H1 (cell line): ENCODE measurements at regions of chr11 and their contacts with region 1.

Region 1: DNA sequence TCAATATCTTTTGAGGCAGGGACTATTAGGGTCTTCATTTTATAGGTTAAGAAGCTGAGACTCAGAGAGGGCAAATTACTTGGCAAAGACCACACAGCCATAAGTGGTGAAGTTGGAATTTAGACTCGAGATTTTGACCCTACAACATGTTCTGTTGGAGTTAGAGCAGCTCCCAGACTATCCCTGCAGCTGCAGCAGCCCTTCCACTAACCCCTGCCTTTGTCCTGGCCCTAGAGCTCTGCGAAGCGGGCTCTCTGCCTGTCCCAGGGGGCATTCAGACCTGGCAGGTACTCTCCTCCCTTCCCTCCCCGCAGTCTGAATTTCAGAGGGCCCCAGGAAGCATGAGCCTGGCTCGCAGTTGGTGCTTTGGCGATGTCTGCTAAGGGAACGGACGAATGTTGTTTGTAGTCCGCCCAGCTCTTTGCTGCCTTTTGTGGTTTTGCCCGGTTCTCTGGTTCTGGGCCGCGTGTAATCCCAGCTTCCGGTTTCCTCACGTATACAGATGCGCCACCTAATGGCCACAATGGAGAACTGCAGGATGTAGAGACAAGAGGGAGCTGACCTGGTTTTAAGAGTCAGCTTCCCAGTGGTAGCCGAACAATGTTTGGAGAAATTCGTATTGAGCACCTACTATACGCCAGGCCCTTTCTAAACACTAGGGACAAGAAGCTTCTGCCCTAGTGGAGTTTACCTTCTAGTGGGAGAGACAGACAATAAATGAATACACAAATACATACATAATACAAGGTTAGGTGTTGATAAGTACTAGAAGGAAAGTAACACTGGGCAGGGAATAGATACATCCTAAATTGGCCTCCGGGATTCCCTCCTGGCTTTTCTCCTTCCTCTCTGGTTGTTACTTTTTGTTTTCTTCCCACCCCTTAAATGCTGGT is 125.2 kb downstream of the ST3GAL4 start:
- DNase-seq: peak; percentile 77 to 80
- H3K4me3 ChIP-seq: peak overlapping the region in 1 of 4 experiments; percentile 20; a peak in 1 of 8 replicates
- H3K27ac ChIP-seq: peak overlapping the region; percentile 72; the same call in 1 of the 2 replicates
- H3K4me1 ChIP-seq: peaks cover 0 to 6% (median 2%) of the 10 kb centered on the region in 4 experiments; a peak in 6 of 7 replicates
- H3K27me3 ChIP-seq: no peaks in the 10 kb centered on the region
- CTCF ChIP-seq: peak; percentile 59 to 94 (median 85)
- EP300 ChIP-seq: 0 out of 3 replicates have a peak, but pooled peaks of 1 of the 2 experiments have one; percentile 41
- POLR2A ChIP-seq: peak in 1 of 2 experiments; percentile 78; a peak in 2 of 3 replicates
- RAD21 ChIP-seq: peak; percentile 72 to 78

Region 2: DNA sequence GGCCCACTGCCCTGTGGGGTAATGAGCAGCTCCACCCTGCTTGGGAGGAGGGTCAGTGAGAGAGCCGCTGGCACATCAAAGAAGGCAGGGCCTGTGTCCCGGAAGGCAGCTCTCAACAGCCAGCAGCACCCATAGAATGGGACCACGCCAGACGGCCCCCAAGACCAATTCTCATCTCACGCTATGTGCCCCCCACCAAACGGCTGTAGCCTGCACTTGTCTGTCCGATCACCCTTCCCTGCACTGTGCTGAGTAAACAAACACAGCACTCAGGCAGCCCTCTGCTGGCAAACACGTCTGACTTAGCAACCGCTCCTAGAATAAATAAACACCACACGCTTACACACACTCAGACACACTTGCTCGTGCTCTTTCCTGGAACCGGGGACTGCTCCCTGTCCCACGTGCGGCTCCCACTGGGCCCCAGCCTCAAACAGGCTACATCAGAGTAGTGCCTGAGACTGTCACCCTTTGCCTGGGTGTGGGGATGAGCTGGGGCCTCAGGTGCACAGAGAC is 364.8 kb before region 1 on chr11:
- CTCF ChIA-PET with region 1: no interaction called
- POLR2A ChIA-PET with region 1: no interaction called
- DNase-seq: no peak
- H3K4me3 ChIP-seq: no peak overlapping the region
- H3K27ac ChIP-seq: no peak overlapping the region; the same call in 1 of the 2 replicates
- H3K4me1 ChIP-seq: peaks cover 0 to 7% (median 0%) of the 10 kb centered on the region in 4 experiments; a peak in 3 of 7 replicates
- H3K27me3 ChIP-seq: 0 out of 7 replicates have a peak, but pooled peaks cover 0 to 3% (median 0%) of the 10 kb centered on the region in 4 experiments
- CTCF ChIP-seq: peak in 2 of 3 experiments; percentile 8 to 20; a peak in 2 of 4 replicates
- EP300 ChIP-seq: no peak
- POLR2A ChIP-seq: no peak
- RAD21 ChIP-seq: peak in 1 of 2 experiments; percentile 16; a peak in 2 of 4 replicates

Region 3: GRCh38 chr11:126293726-126294125 is 186.9 kb before region 1 on chr11:
- CTCF ChIA-PET with region 1: no interaction called
- POLR2A ChIA-PET with region 1: no interaction called
- DNase-seq: no peak
- H3K4me3 ChIP-seq: no peak overlapping the region
- H3K27ac ChIP-seq: no peak overlapping the region
- H3K4me1 ChIP-seq: no peaks in the 10 kb centered on the region
- H3K27me3 ChIP-seq: no peaks in the 10 kb centered on the region
- CTCF ChIP-seq: no peak
- EP300 ChIP-seq: no peak
- POLR2A ChIP-seq: no peak
- RAD21 ChIP-seq: no peak

Region 4: GRCh38 chr11:126431401-126432064 is 49.1 kb before region 1 on chr11:
- CTCF ChIA-PET with region 1: interaction called, 10 read pairs
- POLR2A ChIA-PET with region 1: no interaction called
- DNase-seq: no peak
- H3K4me3 ChIP-seq: no peak overlapping the region
- H3K27ac ChIP-seq: no peak overlapping the region
- H3K4me1 ChIP-seq: peaks cover 0 to 18% (median 6%) of the 10 kb centered on the region in 4 experiments; a peak in 5 of 7 replicates
- H3K27me3 ChIP-seq: no peaks in the 10 kb centered on the region
- CTCF ChIP-seq: no peak
- EP300 ChIP-seq: no peak
- POLR2A ChIP-seq: no peak
- RAD21 ChIP-seq: no peak

Region 5: GRCh38 chr11:126446581-126446980 is 34.1 kb before region 1 on chr11:
- CTCF ChIA-PET with region 1: interaction called, 54 read pairs
- POLR2A ChIA-PET with region 1: interaction called, 3 read pairs
- DNase-seq: no peak
- H3K4me3 ChIP-seq: no peak overlapping the region
- H3K27ac ChIP-seq: no peak overlapping the region
- H3K4me1 ChIP-seq: peaks cover 1 to 5% (median 2%) of the 10 kb centered on the region in 4 experiments; a peak in 4 of 7 replicates
- H3K27me3 ChIP-seq: no peaks in the 10 kb centered on the region
- CTCF ChIP-seq: no peak
- EP300 ChIP-seq: no peak
- POLR2A ChIP-seq: no peak
- RAD21 ChIP-seq: no peak

Region 6: GRCh38 chr11:126465573-126466188 is 15.0 kb before region 1 on chr11:
- CTCF ChIA-PET with region 1: interaction called, 57 read pairs
- POLR2A ChIA-PET with region 1: interaction called, 5 read pairs
- DNase-seq: no peak
- H3K4me3 ChIP-seq: no peak overlapping the region
- H3K27ac ChIP-seq: no peak overlapping the region
- H3K4me1 ChIP-seq: peaks cover 0 to 4% (median under 1%) of the 10 kb centered on the region in 4 experiments; a peak in 3 of 7 replicates
- H3K27me3 ChIP-seq: no peaks in the 10 kb centered on the region
- CTCF ChIP-seq: no peak
- EP300 ChIP-seq: no peak
- POLR2A ChIP-seq: no peak
- RAD21 ChIP-seq: no peak

Region 7: GRCh38 chr11:126507646-126508045 is 27.0 kb after region 1 on chr11:
- CTCF ChIA-PET with region 1: interaction called, 18 read pairs
- POLR2A ChIA-PET with region 1: no interaction called
- DNase-seq: no peak
- H3K4me3 ChIP-seq: no peak overlapping the region
- H3K27ac ChIP-seq: no peak overlapping the region
- H3K4me1 ChIP-seq: peaks cover 0 to 9% (median 1%) of the 10 kb centered on the region in 4 experiments; a peak in 4 of 7 replicates
- H3K27me3 ChIP-seq: no peaks in the 10 kb centered on the region
- CTCF ChIP-seq: no peak
- EP300 ChIP-seq: no peak
- POLR2A ChIP-seq: no peak
- RAD21 ChIP-seq: no peak